ENCODE measurements at regions of chr5 and their contacts with region 1.

Region 1: DNA sequence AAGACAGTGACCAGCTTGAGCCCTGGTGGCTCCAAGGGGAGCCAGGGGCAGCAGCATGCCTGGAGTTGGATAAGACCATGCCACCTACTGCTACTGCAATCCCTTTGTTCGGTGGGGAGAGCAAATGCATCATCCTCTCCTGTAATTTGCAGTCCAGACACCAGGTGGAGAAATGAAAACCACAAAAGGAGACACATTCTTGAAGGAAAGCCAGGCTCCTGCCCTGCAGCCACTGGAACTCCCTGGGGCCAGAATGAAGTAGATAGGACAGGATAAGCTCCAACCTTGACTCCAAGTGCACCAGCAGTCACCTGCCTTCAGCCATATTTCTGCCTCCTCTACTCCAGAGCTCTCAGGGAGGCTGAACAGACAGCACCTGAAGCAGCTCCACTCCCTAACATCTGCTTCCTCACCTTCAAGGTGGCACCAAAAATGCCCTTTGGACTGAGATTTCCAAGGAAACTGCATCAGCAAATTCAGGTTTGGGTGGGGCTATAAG is 65.1 kb upstream of the IQGAP2 start:
- DNase-seq: no peak
- ATAC-seq: peak; percentile 42
- H3K4me3 Mint-ChIP-seq: no peak overlapping the region
- H3K27ac Mint-ChIP-seq: no peak overlapping the region
- H3K4me1 Mint-ChIP-seq: peaks cover 4% of the 10 kb centered on the region
- H3K27me3 Mint-ChIP-seq: no peaks in the 10 kb centered on the region
- CTCF ChIP-seq: no peak

Region 2: GRCh38 chr5:76582230-76583162 is 244.5 kb after region 1 on chr5:
- CTCF ChIA-PET with region 1: interaction called, 4 read pairs
- POLR2A ChIA-PET with region 1: no interaction called
- intact Hi-C with region 1: loop called (anchors 2 kb)
- DNase-seq: no peak
- ATAC-seq: peak; percentile 74
- H3K4me3 Mint-ChIP-seq: no peak overlapping the region
- H3K27ac Mint-ChIP-seq: no peak overlapping the region
- H3K4me1 Mint-ChIP-seq: peaks cover 17% of the 10 kb centered on the region
- H3K27me3 Mint-ChIP-seq: no peaks in the 10 kb centered on the region
- CTCF ChIP-seq: no peak

Region 3: DNA sequence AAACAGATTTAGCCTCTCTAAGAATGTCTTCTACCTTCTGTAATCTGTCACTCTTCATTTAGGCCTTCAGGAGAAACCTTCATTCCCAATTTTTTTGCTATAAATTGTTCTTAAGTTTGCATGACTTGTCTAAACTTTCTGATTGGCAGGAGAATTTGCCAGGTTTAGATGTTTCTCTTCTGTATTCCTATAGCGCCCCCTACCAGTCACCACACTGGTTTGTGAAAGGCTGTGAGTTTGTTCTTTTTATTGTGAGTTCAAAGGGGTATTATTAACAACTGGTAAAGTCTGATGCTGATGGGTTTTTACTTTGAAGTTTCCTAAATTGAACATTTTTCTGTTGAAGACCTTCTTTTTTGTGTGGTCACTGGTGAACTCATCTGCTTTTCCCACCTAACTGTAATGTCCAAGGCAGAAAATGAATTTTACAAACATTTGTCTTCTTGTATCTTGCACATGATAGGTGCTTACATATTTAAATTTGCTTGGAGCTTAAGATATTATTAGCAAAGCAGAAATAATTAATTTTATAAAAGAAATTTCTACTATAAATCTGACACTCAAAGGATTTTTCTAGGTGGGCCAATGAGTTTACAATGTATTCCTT is 303.6 kb after region 1 on chr5:
- CTCF ChIA-PET with region 1: no interaction called
- POLR2A ChIA-PET with region 1: no interaction called
- intact Hi-C with region 1: loop called (anchors 2 kb)
- DNase-seq: no peak
- ATAC-seq: no peak
- H3K4me3 Mint-ChIP-seq: no peak overlapping the region
- H3K27ac Mint-ChIP-seq: no peak overlapping the region
- H3K4me1 Mint-ChIP-seq: peaks cover 14% of the 10 kb centered on the region
- H3K27me3 Mint-ChIP-seq: no peaks in the 10 kb centered on the region
- CTCF ChIP-seq: no peak

Measured in activated B cell treated with CpG ODN at 0.5 μM for 24 hours (primary cell).